PC-9 (cell line): ENCODE measurements at regions of chr12 and their contacts with region 1.

Region 1: DNA sequence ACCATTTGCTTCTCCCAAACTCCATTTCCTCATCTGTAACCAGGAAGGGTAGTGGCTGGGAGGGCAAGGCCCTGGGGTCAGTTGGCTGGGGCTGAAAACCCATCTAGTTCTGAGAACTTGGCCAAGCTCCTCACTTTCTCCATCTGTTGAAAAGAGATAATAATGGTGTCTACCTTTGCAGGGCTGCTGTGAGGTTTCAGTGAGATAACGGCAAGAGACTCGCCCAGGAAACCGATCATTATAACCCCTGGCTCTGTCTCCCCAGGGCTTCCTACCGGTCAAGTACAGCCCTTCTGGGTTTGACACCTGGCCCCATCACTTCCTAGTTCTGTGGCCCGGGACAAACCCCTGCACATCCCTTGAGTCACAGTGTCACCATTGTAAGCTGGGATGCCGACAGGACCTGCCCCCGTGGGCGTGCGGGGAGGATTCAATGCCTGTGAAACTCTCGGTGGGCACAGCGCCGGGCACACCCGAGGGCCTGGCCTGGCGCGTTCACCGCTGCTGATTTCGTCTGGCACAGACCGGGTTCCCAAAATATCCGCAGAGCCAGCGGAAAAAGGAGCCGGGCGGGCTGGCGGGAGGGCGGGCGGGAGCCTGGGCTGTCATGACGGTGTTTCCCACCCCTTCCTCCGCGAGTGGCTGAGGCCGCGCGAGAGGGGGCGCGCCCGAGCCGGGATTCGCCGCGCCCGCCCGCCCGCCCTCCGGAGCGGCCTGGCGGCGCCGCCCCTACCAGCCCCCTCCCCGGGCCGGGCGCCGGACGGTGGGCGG is 4.4 kb downstream of the KMT5A start:
- DNase-seq: peak; percentile 49 to 74
- H3K4me3 ChIP-seq: peak overlapping the region; percentile 80
- H3K27ac ChIP-seq: 0 out of 2 replicates have a peak overlapping the region, but pooled peaks have one; percentile 35
- H3K4me1 ChIP-seq: peaks cover 30% of the 10 kb centered on the region
- H3K27me3 ChIP-seq: no peaks in the 10 kb centered on the region
- CTCF ChIP-seq: no peak

Region 2: GRCh38 chr12:123591702-123592481 is 203.5 kb after region 1 on chr12:
- CTCF ChIA-PET with region 1: interaction called, 11 read pairs
- POLR2A ChIA-PET with region 1: no interaction called
- intact Hi-C with region 1: no loop called
- DNase-seq: no peak
- H3K4me3 ChIP-seq: no peak overlapping the region
- H3K27ac ChIP-seq: no peak overlapping the region
- H3K4me1 ChIP-seq: peaks cover 12% of the 10 kb centered on the region; the same call in 1 of the 2 replicates
- H3K27me3 ChIP-seq: no peaks in the 10 kb centered on the region
- CTCF ChIP-seq: no peak